IMR-90 (cell line): ENCODE measurements at regions of chr5 and their contacts with region 1.

Region 1: DNA sequence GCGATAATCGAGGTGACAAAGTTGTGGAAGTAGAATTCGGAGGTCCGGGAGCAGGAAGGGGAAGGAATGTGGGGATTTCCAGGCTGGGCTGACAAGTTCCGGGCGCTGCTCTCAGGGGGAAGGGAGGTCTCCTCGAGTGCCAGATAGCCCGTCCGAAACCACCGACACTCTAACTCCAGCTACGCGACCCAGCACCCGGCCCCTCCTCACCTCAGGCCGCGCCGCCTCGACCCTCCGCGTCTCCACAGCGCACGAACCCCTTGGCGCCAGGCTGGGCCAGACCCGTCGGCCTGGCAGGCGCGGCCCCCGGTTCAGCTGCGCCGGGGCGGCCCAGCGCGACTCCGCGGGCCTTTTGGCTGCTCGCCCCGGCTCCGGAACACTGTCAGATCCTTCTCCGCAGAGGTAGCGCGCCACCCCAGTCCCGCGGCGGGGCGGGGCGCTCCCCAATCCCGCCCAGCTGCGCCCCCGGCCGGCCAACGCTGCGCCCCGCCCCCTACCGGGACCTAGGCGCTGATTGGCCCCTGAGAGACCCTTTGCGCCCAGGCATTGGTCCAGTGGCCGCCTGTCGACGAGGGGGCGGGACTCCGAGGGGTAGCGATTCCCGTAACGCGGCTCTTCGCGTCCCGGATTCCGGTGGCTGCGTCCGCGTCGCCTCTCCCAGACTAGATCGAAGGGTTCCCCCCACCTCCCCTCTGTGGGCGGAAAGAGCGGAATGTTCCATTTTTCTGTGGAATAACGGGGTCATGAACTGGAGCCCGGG is at the start of gene IL6ST:
- DNase-seq: peak; percentile 96
- ATAC-seq: peak; percentile 96
- H3K4me3 ChIP-seq: peak within 1 kb of the TSS; percentile 89
- H3K27ac ChIP-seq: peak within 1 kb of the TSS; percentile 100
- H3K4me1 ChIP-seq: peaks cover 3% of the 10 kb centered on the region; the same call in 1 of the 2 replicates
- H3K27me3 ChIP-seq: no peaks in the 10 kb centered on the region
- CTCF ChIP-seq: 0 out of 2 replicates have a peak, but pooled peaks have one; percentile 22
- POLR2A ChIP-seq: peak; percentile 95
- RAD21 ChIP-seq: no peak; the same call in 1 of the 2 replicates
- total RNA-seq, gene IL6ST: 506 and 533 TPM in 2 replicates

Region 2: DNA sequence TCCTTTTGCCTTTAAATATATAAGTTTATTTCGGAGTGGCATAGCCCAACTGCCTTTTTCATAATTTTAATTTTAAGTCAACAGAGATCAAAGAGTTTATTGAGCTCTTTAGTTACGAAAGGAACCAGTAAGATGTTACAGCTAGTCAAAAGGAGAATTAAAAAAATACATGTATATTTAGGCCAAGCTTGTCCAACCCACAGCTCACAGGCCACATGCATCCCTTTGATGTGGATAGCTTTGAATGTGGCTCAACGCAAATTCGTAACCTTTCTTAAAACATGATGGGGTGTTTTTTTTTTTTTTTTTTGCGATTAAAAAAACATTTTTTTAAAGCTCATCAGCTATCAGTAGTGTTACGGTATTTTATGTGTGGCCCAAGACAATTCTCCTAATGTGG is 193.8 kb before region 1 on chr5:
- CTCF ChIA-PET with region 1: no interaction called
- POLR2A ChIA-PET with region 1: no interaction called
- dilution Hi-C with region 1: no loop called
- in situ Hi-C with region 1: no loop called
- intact Hi-C with region 1: no loop called
- DNase-seq: no peak
- ATAC-seq: no peak
- H3K4me3 ChIP-seq: no peak overlapping the region
- H3K27ac ChIP-seq: no peak overlapping the region
- H3K4me1 ChIP-seq: no peaks in the 10 kb centered on the region
- H3K27me3 ChIP-seq: peaks cover 2% of the 10 kb centered on the region; the same call in 1 of the 2 replicates
- CTCF ChIP-seq: no peak
- POLR2A ChIP-seq: no peak
- RAD21 ChIP-seq: no peak

Region 3: GRCh38 chr5:55897905-55898304 is 96.8 kb before region 1 on chr5:
- CTCF ChIA-PET with region 1: no interaction called
- POLR2A ChIA-PET with region 1: no interaction called
- dilution Hi-C with region 1: no loop called
- in situ Hi-C with region 1: no loop called
- intact Hi-C with region 1: no loop called
- DNase-seq: peak; percentile 62
- ATAC-seq: peak; percentile 40; the same call in 1 of the 2 replicates
- H3K4me3 ChIP-seq: no peak overlapping the region
- H3K27ac ChIP-seq: no peak overlapping the region
- H3K4me1 ChIP-seq: peaks cover 6% of the 10 kb centered on the region
- H3K27me3 ChIP-seq: no peaks in the 10 kb centered on the region
- CTCF ChIP-seq: no peak
- POLR2A ChIP-seq: no peak
- RAD21 ChIP-seq: no peak

Region 4: DNA sequence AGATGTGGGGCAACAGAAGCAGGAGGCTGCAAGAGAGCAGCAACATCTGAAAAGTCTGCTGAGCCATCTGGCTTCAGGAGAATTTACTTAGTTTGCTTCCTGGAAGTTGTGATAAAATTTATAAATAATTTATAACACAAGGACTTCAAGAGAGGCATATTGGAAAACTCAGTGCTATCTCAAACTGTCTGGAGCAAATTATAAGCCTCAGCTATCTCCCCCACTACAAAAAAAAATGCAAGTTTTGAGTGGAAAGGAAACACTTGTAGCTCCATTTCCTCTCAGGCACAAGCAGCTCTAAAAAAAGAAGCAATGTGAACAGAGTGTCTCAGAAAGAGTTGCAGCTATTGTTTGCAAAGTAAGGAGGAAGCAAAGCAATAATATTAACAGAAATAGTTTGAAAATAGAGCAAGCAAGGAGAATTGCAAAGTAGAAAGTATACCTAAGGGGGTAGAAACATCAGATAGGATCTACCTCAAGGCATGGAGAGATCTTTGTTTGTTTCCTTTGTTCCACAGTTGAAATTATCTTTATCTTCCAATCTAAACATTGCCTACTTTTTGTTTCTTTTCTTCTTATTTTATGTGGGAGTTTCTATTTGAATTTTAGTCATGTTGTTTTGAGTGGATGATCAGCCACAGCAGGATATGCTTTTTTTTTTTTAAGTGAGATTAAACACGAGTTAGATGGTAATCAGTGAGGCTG is 55.9 kb after region 1 on chr5:
- CTCF ChIA-PET with region 1: no interaction called
- POLR2A ChIA-PET with region 1: no interaction called
- dilution Hi-C with region 1: no loop called
- in situ Hi-C with region 1: no loop called
- intact Hi-C with region 1: loop called (anchors 5 kb)
- DNase-seq: no peak
- ATAC-seq: peak; percentile 17; the same call in 1 of the 2 replicates
- H3K4me3 ChIP-seq: no peak overlapping the region
- H3K27ac ChIP-seq: peak overlapping the region; percentile 59; the same call in 1 of the 2 replicates
- H3K4me1 ChIP-seq: peaks cover 3% of the 10 kb centered on the region
- H3K27me3 ChIP-seq: no peaks in the 10 kb centered on the region
- CTCF ChIP-seq: no peak
- POLR2A ChIP-seq: no peak
- RAD21 ChIP-seq: no peak

Region 5: DNA sequence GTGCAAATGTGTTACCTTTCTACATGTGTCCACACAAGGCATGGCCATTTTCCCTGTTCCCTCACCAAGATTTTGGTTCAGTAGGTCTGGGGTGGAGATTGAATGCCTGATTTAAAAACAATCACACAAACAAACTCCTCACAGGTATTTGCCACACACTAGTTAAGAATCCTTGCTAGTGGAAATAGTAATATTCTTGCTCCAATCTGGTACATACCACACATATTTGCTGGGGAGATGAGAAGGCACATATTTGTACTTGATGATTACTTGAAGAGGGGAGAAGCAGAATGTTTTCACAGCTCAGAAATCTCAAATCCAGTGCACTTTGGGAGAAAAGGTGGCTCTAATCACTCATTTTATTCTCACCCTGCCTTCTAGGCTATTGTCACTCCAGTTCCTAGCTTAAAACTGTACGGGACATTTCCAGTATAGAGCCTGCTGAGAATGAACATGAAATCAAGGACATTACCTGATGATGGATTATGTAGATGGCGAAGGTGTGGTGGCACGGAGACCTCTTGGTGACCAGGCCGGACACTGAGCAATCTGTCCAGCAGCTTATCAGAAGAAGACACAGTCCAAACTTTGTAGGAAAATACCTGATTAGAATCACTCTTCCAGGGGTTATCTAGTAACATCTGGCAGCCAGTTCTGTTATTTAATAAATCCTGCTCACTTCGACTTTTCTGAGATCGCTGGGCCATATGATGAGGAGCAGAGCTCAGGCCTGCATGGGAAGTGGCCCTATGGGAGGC is 116.1 kb after region 1 on chr5:
- CTCF ChIA-PET with region 1: no interaction called
- POLR2A ChIA-PET with region 1: no interaction called
- dilution Hi-C with region 1: no loop called
- in situ Hi-C with region 1: no loop called
- intact Hi-C with region 1: no loop called
- DNase-seq: peak; percentile 46
- ATAC-seq: peak; percentile 90
- H3K4me3 ChIP-seq: no peak overlapping the region
- H3K27ac ChIP-seq: peak overlapping the region; percentile 64; the same call in 1 of the 2 replicates
- H3K4me1 ChIP-seq: peaks cover 9% of the 10 kb centered on the region
- H3K27me3 ChIP-seq: no peaks in the 10 kb centered on the region
- CTCF ChIP-seq: no peak
- POLR2A ChIP-seq: no peak
- RAD21 ChIP-seq: no peak

Region 6: GRCh38 chr5:56123531-56124243 is 128.9 kb after region 1 on chr5:
- CTCF ChIA-PET with region 1: no interaction called
- POLR2A ChIA-PET with region 1: no interaction called
- dilution Hi-C with region 1: no loop called
- in situ Hi-C with region 1: no loop called
- intact Hi-C with region 1: loop called (anchors 1 kb)
- DNase-seq: peak; percentile 100
- ATAC-seq: peak; percentile 90
- H3K4me3 ChIP-seq: no peak overlapping the region
- H3K27ac ChIP-seq: peak overlapping the region; percentile 65; the same call in 1 of the 2 replicates
- H3K4me1 ChIP-seq: peaks cover 16% of the 10 kb centered on the region
- H3K27me3 ChIP-seq: no peaks in the 10 kb centered on the region
- CTCF ChIP-seq: no peak
- POLR2A ChIP-seq: no peak
- RAD21 ChIP-seq: peak; percentile 25

Region 7: GRCh38 chr5:56175488-56175887 is 180.7 kb after region 1 on chr5:
- CTCF ChIA-PET with region 1: no interaction called
- POLR2A ChIA-PET with region 1: interaction called, 3 read pairs
- dilution Hi-C with region 1: no loop called
- in situ Hi-C with region 1: no loop called
- intact Hi-C with region 1: loop called (anchors 5 kb)
- DNase-seq: peak; percentile 84
- ATAC-seq: peak; percentile 76
- H3K4me3 ChIP-seq: no peak overlapping the region
- H3K27ac ChIP-seq: peak overlapping the region; percentile 66; the same call in 1 of the 2 replicates
- H3K4me1 ChIP-seq: peaks cover 19% of the 10 kb centered on the region
- H3K27me3 ChIP-seq: no peaks in the 10 kb centered on the region
- CTCF ChIP-seq: no peak
- POLR2A ChIP-seq: no peak
- RAD21 ChIP-seq: no peak

Region 8: DNA sequence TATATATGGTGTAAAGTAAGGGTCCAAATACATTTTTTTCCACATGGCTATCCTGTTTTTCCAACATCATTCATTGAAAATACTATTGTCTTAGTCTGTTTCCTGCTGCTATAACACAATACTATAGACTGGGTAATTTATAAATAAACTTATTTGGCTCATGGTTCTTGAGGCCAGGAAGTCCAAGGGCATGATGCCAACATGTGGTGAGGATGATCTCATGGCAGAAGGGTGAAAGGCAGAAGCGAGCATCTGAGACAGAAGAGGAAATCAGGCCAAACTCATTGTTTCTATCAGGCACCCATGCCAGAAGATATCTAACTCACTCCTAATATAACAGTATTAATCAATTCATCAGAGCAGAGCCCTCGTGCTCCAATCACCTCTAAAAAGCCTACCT is 195.7 kb after region 1 on chr5:
- CTCF ChIA-PET with region 1: no interaction called
- POLR2A ChIA-PET with region 1: interaction called, 3 read pairs
- dilution Hi-C with region 1: no loop called
- in situ Hi-C with region 1: loop called (anchors 5 kb)
- intact Hi-C with region 1: no loop called
- DNase-seq: peak; percentile 80
- ATAC-seq: no peak
- H3K4me3 ChIP-seq: no peak overlapping the region
- H3K27ac ChIP-seq: no peak overlapping the region
- H3K4me1 ChIP-seq: peaks cover 2% of the 10 kb centered on the region
- H3K27me3 ChIP-seq: no peaks in the 10 kb centered on the region
- CTCF ChIP-seq: no peak
- POLR2A ChIP-seq: no peak
- RAD21 ChIP-seq: no peak

Region 9: DNA sequence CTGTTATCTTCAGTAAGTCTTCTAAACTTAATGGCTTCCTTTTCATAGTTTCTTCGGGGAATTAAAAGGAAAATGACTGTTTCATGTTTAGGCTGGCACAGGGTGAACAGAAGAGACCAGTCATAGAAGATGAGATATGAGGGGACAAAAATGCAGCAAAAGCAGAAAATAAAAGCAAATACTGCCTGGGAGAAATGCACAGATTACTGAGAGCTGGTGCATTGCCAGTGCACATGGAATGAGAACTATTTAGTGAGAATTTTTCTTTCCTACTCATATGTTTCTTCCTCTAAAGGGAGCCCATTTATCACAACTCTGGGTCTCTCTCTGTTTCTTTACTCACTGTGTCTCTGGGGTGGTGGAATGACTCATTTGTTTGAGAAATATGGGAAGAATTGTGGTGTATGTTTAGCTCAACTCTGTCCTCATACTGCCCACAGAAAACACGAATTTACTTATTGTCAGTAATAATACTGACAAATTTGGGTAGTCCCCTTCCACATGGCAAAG is 264.3 kb after region 1 on chr5:
- CTCF ChIA-PET with region 1: no interaction called
- POLR2A ChIA-PET with region 1: no interaction called
- dilution Hi-C with region 1: no loop called
- in situ Hi-C with region 1: no loop called
- intact Hi-C with region 1: loop called (anchors 2 kb)
- DNase-seq: peak; percentile 97
- ATAC-seq: peak; percentile 96
- H3K4me3 ChIP-seq: peak overlapping the region; percentile 17; the same call in 1 of the 2 replicates
- H3K27ac ChIP-seq: peak overlapping the region; percentile 91
- H3K4me1 ChIP-seq: peaks cover 12% of the 10 kb centered on the region
- H3K27me3 ChIP-seq: no peaks in the 10 kb centered on the region
- CTCF ChIP-seq: no peak
- POLR2A ChIP-seq: no peak
- RAD21 ChIP-seq: no peak